Activated CD4-positive, alpha-beta memory T cell treated with anti-CD3 and anti-CD28 coated beads, Interleukin-2, amount 10 ng/mL, durations not matched to agents 7 days and 5 days (primary cell): ENCODE measurements at regions of chr17 and their contacts with region 1.

Region 1: GRCh38 chr17:28552246-28552999 is at the start of gene UNC119:
- DNase-seq: peak; percentile 84
- H3K4me3 Mint-ChIP-seq: peak within 1 kb of the TSS; percentile 80
- H3K27ac Mint-ChIP-seq: peak within 1 kb of the TSS; percentile 58
- H3K4me1 Mint-ChIP-seq: peaks cover 46% of the 10 kb centered on the region
- H3K27me3 Mint-ChIP-seq: no peaks in the 10 kb centered on the region
- total RNA-seq, gene UNC119: 46.2 to 61.1 TPM

Region 2: DNA sequence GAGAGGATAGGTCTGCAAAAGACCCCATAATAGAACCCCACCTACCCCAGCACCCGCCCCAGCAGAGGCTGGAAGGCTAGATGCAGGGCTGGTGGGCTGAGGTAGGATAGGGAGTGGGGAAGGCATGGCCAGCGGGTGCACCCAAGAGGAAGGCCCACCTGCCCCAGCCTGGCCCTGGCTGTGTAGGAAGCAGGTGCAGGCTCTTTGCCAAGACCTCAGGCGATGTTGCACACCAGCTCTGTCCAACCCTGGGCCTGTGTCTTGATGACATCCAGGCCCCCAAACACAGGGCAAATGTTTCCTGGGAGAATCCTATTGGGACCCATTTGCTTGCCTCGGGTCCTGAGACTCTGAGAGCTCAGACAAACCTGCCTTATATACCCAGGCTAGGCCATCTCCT is 12.2 kb before region 1 on chr17:
- CTCF ChIA-PET with region 1: interaction called, 17 read pairs
- POLR2A ChIA-PET with region 1: no interaction called
- DNase-seq: no peak
- H3K4me3 Mint-ChIP-seq: no peak overlapping the region
- H3K27ac Mint-ChIP-seq: no peak overlapping the region
- H3K4me1 Mint-ChIP-seq: no peaks in the 10 kb centered on the region
- H3K27me3 Mint-ChIP-seq: no peaks in the 10 kb centered on the region

Region 3: GRCh38 chr17:28571255-28572122 is 19.1 kb after region 1 on chr17 and contains the start of gene PIGS:
- CTCF ChIA-PET with region 1: interaction called, 23 read pairs
- POLR2A ChIA-PET with region 1: interaction called, 64 read pairs
- DNase-seq: peak; percentile 94
- H3K4me3 Mint-ChIP-seq: peak within 1 kb of the TSS; percentile 96
- H3K27ac Mint-ChIP-seq: peak within 1 kb of the TSS; percentile 84
- H3K4me1 Mint-ChIP-seq: peaks cover 60% of the 10 kb centered on the region
- H3K27me3 Mint-ChIP-seq: no peaks in the 10 kb centered on the region
- total RNA-seq, gene PIGS: 66.3 to 66.6 TPM

Region 4: GRCh38 chr17:28576758-28577465 is 24.5 kb after region 1 on chr17 and contains the start of gene ALDOC:
- CTCF ChIA-PET with region 1: interaction called, 23 read pairs
- POLR2A ChIA-PET with region 1: interaction called, 64 read pairs
- DNase-seq: peak; percentile 98
- H3K4me3 Mint-ChIP-seq: peak within 1 kb of the TSS; percentile 84
- H3K27ac Mint-ChIP-seq: peak within 1 kb of the TSS; percentile 72
- H3K4me1 Mint-ChIP-seq: peaks cover 73% of the 10 kb centered on the region
- H3K27me3 Mint-ChIP-seq: no peaks in the 10 kb centered on the region
- total RNA-seq, gene ALDOC: 140 to 147 TPM